Heart right ventricle (tissue), 16 donors: ENCODE measurements at regions of chr15 and their contacts with region 1.

Region 1: DNA sequence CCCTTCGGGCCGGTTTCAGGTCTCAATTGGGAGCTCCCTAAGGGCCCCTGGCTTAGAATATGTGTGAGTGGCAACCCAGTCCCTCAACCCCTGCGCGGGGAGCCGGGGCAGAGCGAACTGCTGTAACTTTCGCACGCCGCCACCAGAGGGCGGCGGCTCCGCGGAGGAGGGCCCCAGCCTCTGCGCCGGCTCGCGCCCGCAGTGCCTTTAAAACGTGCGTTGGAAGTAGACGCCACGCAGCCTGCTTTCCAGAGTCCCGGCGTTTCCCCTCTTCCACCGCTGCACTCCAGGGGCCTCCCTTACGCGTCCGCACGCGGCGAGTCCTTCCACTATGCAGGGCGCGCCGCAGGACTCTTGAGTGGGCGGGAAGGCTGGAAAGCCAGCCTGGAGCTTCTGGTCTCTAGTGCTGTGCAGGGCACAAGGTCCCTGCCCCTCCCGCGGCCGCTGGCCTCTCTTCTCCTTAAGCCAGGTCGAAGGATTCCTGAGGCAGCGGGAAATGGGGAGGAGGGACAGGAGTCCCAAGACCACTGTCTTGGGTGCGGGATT is 23.7 kb upstream of the RNU6-1 start:
- DNase-seq: peak; percentile 72 to 83
- ATAC-seq: peak; percentile 97 to 98 (median 98)
- H3K4me3 ChIP-seq: peak overlapping the region in 9 of 10 donors; percentile 32 to 57 (median 51)
- H3K27ac ChIP-seq: peak overlapping the region in 4 of 10 donors; percentile 26 to 42 (median 32)
- H3K4me1 ChIP-seq: peaks cover 2 to 15% (median 11%) of the 10 kb centered on the region in 9 donors
- H3K27me3 ChIP-seq: no peaks in the 10 kb centered on the region
- CTCF ChIP-seq: peak; percentile 81 to 98 (median 97)

Region 2: GRCh38 chr15:67914537-67915460 is 51.3 kb after region 1 on chr15:
- intact Hi-C with region 1: loop called in 1 of 10 experiments (anchors 10 kb)
- DNase-seq: peak; percentile 47 to 60
- ATAC-seq: peak; percentile 25 to 86 (median 75)
- H3K4me3 ChIP-seq: no peak overlapping the region
- H3K27ac ChIP-seq: peak overlapping the region; percentile 15 to 91 (median 78)
- H3K4me1 ChIP-seq: peaks cover 4 to 45% (median 32%) of the 10 kb centered on the region in 9 donors
- H3K27me3 ChIP-seq: no peaks in the 10 kb centered on the region
- CTCF ChIP-seq: no peak

Region 3: GRCh38 chr15:68053701-68054627 is 190.4 kb after region 1 on chr15 and contains the start of gene PIAS1:
- intact Hi-C with region 1: loop called in 6 of 10 experiments (anchors 2 to 10 kb)
- DNase-seq: peak; percentile 93 to 97
- ATAC-seq: peak; percentile 97 to 99 (median 98)
- H3K4me3 ChIP-seq: peak within 1 kb of the TSS; percentile 86 to 96 (median 92)
- H3K27ac ChIP-seq: peak within 1 kb of the TSS; percentile 60 to 96 (median 92)
- H3K4me1 ChIP-seq: peaks cover 0 to 42% (median 32%) of the 10 kb centered on the region in 9 donors
- H3K27me3 ChIP-seq: no peaks in the 10 kb centered on the region
- CTCF ChIP-seq: peak in 2 of 9 donors; percentile 14 to 21
- total RNA-seq, gene PIAS1: 23.5 to 37.9 (median 31.6) TPM

Region 4: DNA sequence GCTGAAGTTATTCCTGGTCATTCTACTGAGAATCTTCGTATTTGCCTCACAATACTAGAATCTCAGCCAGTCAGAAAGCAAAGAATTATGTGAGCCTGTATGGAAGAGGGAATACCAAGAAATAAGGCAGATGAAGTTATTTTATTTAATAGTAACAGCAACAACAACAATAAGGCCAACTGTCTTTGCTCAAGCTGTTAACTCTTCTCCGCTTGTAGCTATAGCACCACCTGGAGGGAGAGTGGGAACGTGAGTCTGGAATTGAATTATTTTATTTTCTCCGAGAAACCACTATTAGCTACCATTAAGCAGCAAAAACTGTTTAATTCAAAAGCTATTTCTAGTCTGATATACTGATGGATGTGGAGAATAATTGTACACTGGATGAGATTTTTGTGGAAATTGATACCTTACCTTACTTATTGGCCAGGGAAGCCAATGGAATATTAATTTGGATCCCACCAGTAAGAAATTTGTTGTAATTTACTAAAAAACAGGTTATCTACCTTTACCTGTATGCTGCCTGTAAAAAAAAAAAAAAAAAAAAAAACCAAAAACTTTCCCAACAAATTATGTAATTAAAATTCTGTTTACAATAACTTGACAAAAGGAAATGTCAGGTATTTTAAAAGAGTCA is 291.5 kb after region 1 on chr15:
- intact Hi-C with region 1: loop called (anchors 1 to 5 kb)
- DNase-seq: peak in 1 of 2 donors; percentile 59
- ATAC-seq: peak in 7 of 8 donors; percentile 45 to 75 (median 57)
- H3K4me3 ChIP-seq: no peak overlapping the region
- H3K27ac ChIP-seq: no peak overlapping the region
- H3K4me1 ChIP-seq: peaks cover 0 to 18% (median 0%) of the 10 kb centered on the region in 9 donors
- H3K27me3 ChIP-seq: no peaks in the 10 kb centered on the region
- CTCF ChIP-seq: peak; percentile 59 to 89 (median 72)

Region 5: DNA sequence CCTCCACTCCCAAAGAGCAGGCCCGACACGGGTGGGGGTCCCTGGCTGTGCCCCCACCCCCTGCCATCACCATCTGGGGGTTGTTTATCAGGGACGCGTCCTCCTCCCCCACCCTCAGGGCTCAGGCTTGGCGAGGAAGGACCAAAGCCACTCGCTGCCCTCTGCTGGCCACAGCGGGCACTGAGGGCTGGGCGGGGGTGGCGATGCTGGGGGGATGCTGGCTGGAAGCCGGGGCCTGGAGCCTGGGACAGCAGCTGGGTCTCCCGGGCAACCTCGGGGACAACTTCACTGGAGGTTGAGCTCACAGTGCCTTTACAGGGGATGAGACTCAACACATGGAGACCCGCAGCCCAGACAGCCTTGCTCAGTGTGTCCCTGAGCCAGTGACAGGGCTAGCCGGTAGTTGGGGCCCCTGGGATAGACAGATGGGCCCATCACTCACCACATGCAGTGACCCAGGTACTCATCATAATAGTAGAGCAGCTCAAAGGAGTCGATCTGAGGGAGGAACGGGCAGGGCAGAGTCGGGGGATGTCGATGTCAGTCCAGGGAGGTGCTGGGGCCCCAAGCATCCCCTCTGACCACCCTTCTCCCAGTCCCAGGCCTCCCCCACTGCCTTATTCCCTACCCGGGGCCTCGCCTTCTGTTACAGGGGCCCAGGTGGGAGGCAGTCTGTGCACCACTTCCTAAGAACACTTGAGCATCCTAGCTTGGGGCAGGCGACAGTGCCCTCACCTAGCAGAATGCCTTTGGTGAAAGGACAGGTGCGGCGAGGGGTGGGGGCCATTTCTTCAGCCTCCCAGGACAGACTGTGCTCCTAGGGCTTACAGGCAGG is 347.5 kb after region 1 on chr15:
- intact Hi-C with region 1: loop called in 5 of 10 experiments (anchors 5 to 10 kb)
- DNase-seq: peak; percentile 69 to 73
- ATAC-seq: peak; percentile 47 to 68 (median 62)
- H3K4me3 ChIP-seq: peak overlapping the region in 2 of 10 donors; percentile 16 to 21
- H3K27ac ChIP-seq: no peak overlapping the region
- H3K4me1 ChIP-seq: peaks cover 0 to 55% (median 13%) of the 10 kb centered on the region in 9 donors
- H3K27me3 ChIP-seq: no peaks in the 10 kb centered on the region
- CTCF ChIP-seq: peak; percentile 68 to 91 (median 87)